ENCODE measurements at regions of chr7 and their contacts with region 1.

Region 1: GRCh38 chr7:41996381-41997035 is 240.5 kb downstream of the GLI3 start:
- DNase-seq: peak; percentile 74
- H3K4me3 Mint-ChIP-seq: peak overlapping the region; percentile 60
- H3K27ac Mint-ChIP-seq: peak overlapping the region; percentile 74
- H3K4me1 Mint-ChIP-seq: peaks cover 48% of the 10 kb centered on the region
- H3K27me3 Mint-ChIP-seq: no peaks in the 10 kb centered on the region
- CTCF ChIP-seq: no peak

Region 2: DNA sequence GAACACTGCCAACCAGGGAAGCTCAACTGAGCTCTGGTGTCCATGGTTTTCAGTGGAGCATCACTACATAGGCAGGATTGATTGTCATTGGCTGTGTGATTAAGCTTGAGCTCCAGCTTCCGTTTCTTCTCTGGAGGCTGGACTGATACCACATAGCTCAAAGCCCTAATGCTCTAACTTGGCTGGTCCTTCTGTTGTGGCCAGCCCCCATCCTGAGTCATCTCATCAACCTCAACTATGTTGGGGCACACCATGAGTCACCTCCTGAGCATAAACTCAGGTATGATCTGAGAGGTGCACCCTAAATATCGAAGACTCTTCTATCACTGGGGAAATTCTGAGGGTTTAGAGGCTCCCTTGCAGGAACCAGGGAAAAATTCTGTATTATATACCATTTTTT is 179.1 kb before region 1 on chr7:
- CTCF ChIA-PET with region 1: no interaction called
- POLR2A ChIA-PET with region 1: no interaction called
- intact Hi-C with region 1: no loop called
- DNase-seq: peak; percentile 52
- H3K4me3 Mint-ChIP-seq: no peak overlapping the region
- H3K27ac Mint-ChIP-seq: no peak overlapping the region
- H3K4me1 Mint-ChIP-seq: no peaks in the 10 kb centered on the region
- H3K27me3 Mint-ChIP-seq: no peaks in the 10 kb centered on the region
- CTCF ChIP-seq: no peak

Region 3: GRCh38 chr7:41955893-41956675 is 40.4 kb before region 1 on chr7:
- CTCF ChIA-PET with region 1: no interaction called
- POLR2A ChIA-PET with region 1: interaction called, 11 read pairs
- intact Hi-C with region 1: no loop called
- DNase-seq: peak; percentile 99
- H3K4me3 Mint-ChIP-seq: peak overlapping the region; percentile 53
- H3K27ac Mint-ChIP-seq: peak overlapping the region; percentile 37
- H3K4me1 Mint-ChIP-seq: peaks cover 33% of the 10 kb centered on the region
- H3K27me3 Mint-ChIP-seq: no peaks in the 10 kb centered on the region
- CTCF ChIP-seq: no peak